ENCODE measurements at regions of chr10 and their contacts with region 1.

Region 1: DNA sequence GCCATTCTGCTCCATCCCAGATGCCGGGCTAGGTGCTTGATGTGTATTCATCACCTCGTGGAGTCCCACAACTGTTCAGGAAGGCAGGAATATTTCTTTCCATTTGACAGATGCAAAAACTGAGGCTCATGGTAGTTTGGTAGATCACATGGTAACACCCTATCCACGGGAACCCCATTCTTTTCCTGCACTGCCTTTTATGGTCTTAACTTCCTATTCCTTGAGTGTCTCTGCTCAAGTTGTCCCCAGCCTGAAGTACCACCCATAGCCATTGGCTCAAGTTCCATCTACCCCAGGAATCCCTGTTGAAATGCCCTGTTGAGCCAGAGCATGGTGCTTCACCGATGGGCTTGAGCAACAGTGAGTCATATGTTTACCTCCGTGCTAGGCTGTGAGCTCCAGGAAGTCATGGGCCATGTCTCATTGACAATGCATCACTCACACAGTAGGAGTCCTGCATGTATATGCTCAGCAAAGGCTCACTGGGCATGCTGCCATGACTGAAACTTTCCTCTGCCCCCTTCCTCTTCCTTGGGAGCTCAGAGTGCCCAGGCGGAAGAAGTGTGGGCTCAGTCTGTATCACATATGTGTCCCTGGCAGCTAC is 71.7 kb upstream of the ADAM12 start:
- DNase-seq: peak; percentile 100
- H3K4me3 Mint-ChIP-seq: no peak overlapping the region
- H3K27ac Mint-ChIP-seq: peak overlapping the region; percentile 68
- H3K4me1 Mint-ChIP-seq: peaks cover 10% of the 10 kb centered on the region
- H3K27me3 Mint-ChIP-seq: no peaks in the 10 kb centered on the region
- CTCF ChIP-seq: no peak

Region 2: DNA sequence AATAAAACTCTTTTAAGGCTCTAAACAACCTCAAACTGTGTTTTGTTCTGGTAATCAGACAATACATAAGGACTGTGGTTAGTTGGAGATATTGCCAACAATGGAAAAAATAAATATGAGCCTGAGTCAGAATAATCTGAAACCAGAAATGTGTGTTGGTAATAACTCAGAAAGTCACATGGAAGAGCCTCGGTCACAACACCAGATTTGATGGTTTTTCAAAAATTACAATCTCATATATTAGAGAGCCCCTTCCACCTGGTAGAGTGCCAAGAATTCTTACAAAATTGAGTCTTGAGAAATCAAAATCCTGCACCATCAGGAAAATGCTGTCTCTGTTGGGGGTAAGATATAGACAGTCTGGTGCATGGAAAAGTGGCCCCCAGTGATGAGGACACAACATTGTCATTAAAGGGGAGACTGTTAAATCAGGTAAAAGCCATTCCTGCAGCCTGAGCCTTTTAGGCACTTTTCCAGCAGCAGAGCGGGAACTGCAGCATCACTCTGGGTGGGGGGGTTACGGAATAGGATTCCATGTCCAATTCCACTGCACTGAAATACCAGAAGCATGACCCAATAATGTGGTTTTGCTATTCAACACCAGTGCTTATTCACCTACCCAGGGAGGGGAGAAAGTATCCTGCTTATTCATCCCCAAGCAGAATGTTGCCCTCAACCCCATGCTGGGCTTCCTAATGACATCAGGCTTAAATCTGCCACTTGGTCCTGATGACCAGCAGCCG is 62.2 kb before region 1 on chr10:
- CTCF ChIA-PET with region 1: no interaction called
- POLR2A ChIA-PET with region 1: no interaction called
- intact Hi-C with region 1: loop called (anchors 2 kb)
- DNase-seq: peak; percentile 93
- H3K4me3 Mint-ChIP-seq: peak overlapping the region; percentile 25
- H3K27ac Mint-ChIP-seq: no peak overlapping the region
- H3K4me1 Mint-ChIP-seq: peaks cover 21% of the 10 kb centered on the region
- H3K27me3 Mint-ChIP-seq: no peaks in the 10 kb centered on the region
- CTCF ChIP-seq: no peak